ENCODE measurements at regions of chr12 and their contacts with region 1.

Region 1: GRCh38 chr12:90129366-90130030 is 420.9 kb upstream of the ATP2B1 start:
- DNase-seq: peak; percentile 72 to 78
- H3K4me3 ChIP-seq: no peak overlapping the region
- H3K4me3 Mint-ChIP-seq: peak overlapping the region; percentile 57
- H3K27ac Mint-ChIP-seq: peak overlapping the region; percentile 85
- H3K4me1 ChIP-seq: peaks cover 39% of the 10 kb centered on the region
- H3K4me1 Mint-ChIP-seq: peaks cover 7% of the 10 kb centered on the region
- H3K27me3 ChIP-seq: no peaks in the 10 kb centered on the region
- H3K27me3 Mint-ChIP-seq: no peaks in the 10 kb centered on the region
- CTCF ChIP-seq: no peak

Region 2: GRCh38 chr12:90091021-90091651 is 38.4 kb before region 1 on chr12:
- CTCF ChIA-PET with region 1: no interaction called
- POLR2A ChIA-PET with region 1: no interaction called
- intact Hi-C with region 1: loop called (anchors 2 kb)
- DNase-seq: peak; percentile 33 to 76
- H3K4me3 ChIP-seq: no peak overlapping the region
- H3K4me3 Mint-ChIP-seq: peak overlapping the region; percentile 30
- H3K27ac Mint-ChIP-seq: peak overlapping the region; percentile 74
- H3K4me1 ChIP-seq: peaks cover 4% of the 10 kb centered on the region; the same call in 1 of the 2 replicates
- H3K4me1 Mint-ChIP-seq: peaks cover 25% of the 10 kb centered on the region
- H3K27me3 ChIP-seq: no peaks in the 10 kb centered on the region
- H3K27me3 Mint-ChIP-seq: no peaks in the 10 kb centered on the region
- CTCF ChIP-seq: no peak

Region 3: DNA sequence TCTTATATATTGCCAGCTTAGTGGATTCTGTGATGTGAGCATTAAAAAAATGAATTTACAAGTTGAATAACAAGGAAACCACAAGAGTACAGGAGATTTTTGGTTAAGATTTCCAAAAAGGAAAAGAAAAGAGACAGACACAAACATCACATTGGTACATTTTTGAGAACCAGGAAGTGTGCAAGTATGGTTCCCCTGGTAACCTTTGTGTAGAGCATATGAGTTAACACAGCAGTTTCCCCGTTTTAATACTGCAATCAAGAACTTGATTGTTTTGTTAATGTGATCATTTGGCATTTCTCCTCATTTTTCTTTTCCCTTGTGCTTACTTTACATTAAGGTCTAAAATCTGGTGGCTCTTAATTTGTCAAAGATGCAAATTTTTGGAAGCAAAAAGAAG is 69.5 kb after region 1 on chr12:
- CTCF ChIA-PET with region 1: no interaction called
- POLR2A ChIA-PET with region 1: no interaction called
- intact Hi-C with region 1: no loop called
- DNase-seq: no peak
- H3K4me3 ChIP-seq: no peak overlapping the region
- H3K4me3 Mint-ChIP-seq: no peak overlapping the region
- H3K27ac Mint-ChIP-seq: no peak overlapping the region
- H3K4me1 ChIP-seq: no peaks in the 10 kb centered on the region
- H3K4me1 Mint-ChIP-seq: no peaks in the 10 kb centered on the region
- H3K27me3 ChIP-seq: no peaks in the 10 kb centered on the region
- H3K27me3 Mint-ChIP-seq: no peaks in the 10 kb centered on the region
- CTCF ChIP-seq: no peak

Region 4: GRCh38 chr12:90262251-90262650 is 132.8 kb after region 1 on chr12:
- CTCF ChIA-PET with region 1: no interaction called
- POLR2A ChIA-PET with region 1: no interaction called
- intact Hi-C with region 1: loop called (anchors 5 kb)
- DNase-seq: no peak
- H3K4me3 ChIP-seq: no peak overlapping the region
- H3K4me3 Mint-ChIP-seq: no peak overlapping the region
- H3K27ac Mint-ChIP-seq: no peak overlapping the region
- H3K4me1 ChIP-seq: peaks cover 10% of the 10 kb centered on the region
- H3K4me1 Mint-ChIP-seq: peaks cover 25% of the 10 kb centered on the region
- H3K27me3 ChIP-seq: no peaks in the 10 kb centered on the region
- H3K27me3 Mint-ChIP-seq: no peaks in the 10 kb centered on the region
- CTCF ChIP-seq: no peak

Measured in Caco-2 (cell line).